T-cell (primary cell): ENCODE measurements at regions of chr1 and their contacts with region 1.

Region 1: GRCh38 chr1:153494976-153495535 is 34.6 kb upstream of the S100A7 start:
- DNase-seq: peak; percentile 5 to 77 (median 65)
- ATAC-seq: peak; percentile 52 to 72 (median 61)
- H3K4me3 ChIP-seq: no peak overlapping the region
- H3K4me3 Mint-ChIP-seq: no peak overlapping the region
- H3K27ac ChIP-seq: no peak overlapping the region
- H3K27ac Mint-ChIP-seq: no peak overlapping the region
- H3K4me1 ChIP-seq: no peaks in the 10 kb centered on the region
- H3K4me1 Mint-ChIP-seq: peaks cover 0 to 4% (median 0%) of the 10 kb centered on the region in 3 donors
- H3K27me3 ChIP-seq: peaks cover 0 to 32% of the 10 kb centered on the region in 2 experiments
- H3K27me3 Mint-ChIP-seq: peaks cover 24 to 32% of the 10 kb centered on the region in 2 donors

Region 2: DNA sequence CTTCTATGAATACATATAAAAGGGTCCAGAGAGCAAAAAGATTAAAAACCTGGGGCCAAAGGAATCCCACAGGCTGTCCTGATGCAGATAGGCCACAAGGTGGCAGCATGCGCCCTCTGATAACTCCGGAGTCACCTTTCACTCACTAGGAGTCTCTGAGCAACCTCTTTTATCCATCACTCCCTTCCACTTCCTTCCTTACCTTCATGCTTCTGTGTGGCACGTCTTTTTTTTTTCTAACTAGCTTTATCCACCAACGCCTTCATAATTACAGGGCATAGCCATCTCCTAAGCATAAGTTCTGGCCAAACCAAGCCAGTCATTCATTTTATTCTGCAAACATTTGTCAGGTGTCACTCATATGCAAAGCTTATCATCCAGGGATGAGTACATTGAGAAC is 142.5 kb before region 1 on chr1:
- CTCF ChIA-PET with region 1: interaction called, 7 to 10 read pairs
- POLR2A ChIA-PET with region 1: no interaction called
- DNase-seq: peak in 33 of 35 experiments; percentile 11 to 77 (median 50)
- ATAC-seq: peak; percentile 63 to 70 (median 66)
- H3K4me3 ChIP-seq: no peak overlapping the region
- H3K4me3 Mint-ChIP-seq: no peak overlapping the region
- H3K27ac ChIP-seq: no peak overlapping the region
- H3K27ac Mint-ChIP-seq: no peak overlapping the region
- H3K4me1 ChIP-seq: peaks cover 3 to 10% of the 10 kb centered on the region in 2 experiments
- H3K4me1 Mint-ChIP-seq: peaks cover 11 to 21% (median 13%) of the 10 kb centered on the region in 3 donors
- H3K27me3 ChIP-seq: peaks cover 0 to 43% of the 10 kb centered on the region in 2 experiments
- H3K27me3 Mint-ChIP-seq: peaks cover 7 to 27% of the 10 kb centered on the region in 2 donors